PC-9 (cell line): ENCODE measurements at regions of chr1 and their contacts with region 1.

Region 1: GRCh38 chr1:199684686-199685273 is 342.7 kb upstream of the NR5A2 start:
- DNase-seq: peak; percentile 34 to 70
- H3K4me3 ChIP-seq: no peak overlapping the region
- H3K27ac ChIP-seq: peak overlapping the region; percentile 64
- H3K4me1 ChIP-seq: peaks cover 36% of the 10 kb centered on the region
- H3K27me3 ChIP-seq: no peaks in the 10 kb centered on the region
- CTCF ChIP-seq: peak; percentile 88

Region 2: GRCh38 chr1:199573047-199573446 is 111.7 kb before region 1 on chr1:
- CTCF ChIA-PET with region 1: interaction called, 10 read pairs
- POLR2A ChIA-PET with region 1: no interaction called
- intact Hi-C with region 1: no loop called
- DNase-seq: no peak
- H3K4me3 ChIP-seq: no peak overlapping the region
- H3K27ac ChIP-seq: no peak overlapping the region
- H3K4me1 ChIP-seq: no peaks in the 10 kb centered on the region
- H3K27me3 ChIP-seq: no peaks in the 10 kb centered on the region
- CTCF ChIP-seq: no peak

Region 3: GRCh38 chr1:199808110-199808870 is 123.5 kb after region 1 on chr1:
- CTCF ChIA-PET with region 1: no interaction called
- POLR2A ChIA-PET with region 1: no interaction called
- intact Hi-C with region 1: loop called (anchors 1 kb)
- DNase-seq: peak; percentile 59 to 96
- H3K4me3 ChIP-seq: no peak overlapping the region; the same call in 1 of the 2 replicates
- H3K27ac ChIP-seq: peak overlapping the region; percentile 93
- H3K4me1 ChIP-seq: peaks cover 44% of the 10 kb centered on the region
- H3K27me3 ChIP-seq: no peaks in the 10 kb centered on the region
- CTCF ChIP-seq: no peak

Region 4: DNA sequence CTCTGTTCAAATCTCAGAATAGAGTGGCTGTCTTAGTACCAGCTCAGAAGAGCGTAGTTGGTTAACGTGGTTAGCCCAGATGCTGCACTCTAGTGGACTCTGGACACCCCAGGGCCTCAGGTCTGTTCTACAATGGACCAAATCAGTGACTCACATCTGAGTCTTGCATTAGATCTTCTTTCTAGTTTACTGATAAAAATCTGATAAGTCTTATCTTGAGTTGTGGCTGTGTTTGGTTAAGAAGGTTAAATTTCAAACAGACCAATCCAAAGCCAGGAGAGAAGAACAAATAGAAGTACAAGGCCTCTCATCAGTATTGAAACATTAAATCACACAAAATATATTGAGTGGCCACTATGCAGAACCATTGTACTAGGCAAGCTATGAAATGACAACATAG is 446.8 kb after region 1 on chr1:
- CTCF ChIA-PET with region 1: no interaction called
- POLR2A ChIA-PET with region 1: no interaction called
- intact Hi-C with region 1: loop called (anchors 5 kb)
- DNase-seq: peak; percentile 17 to 77
- H3K4me3 ChIP-seq: no peak overlapping the region
- H3K27ac ChIP-seq: 0 out of 2 replicates have a peak overlapping the region, but pooled peaks have one; percentile 31
- H3K4me1 ChIP-seq: peaks cover 40% of the 10 kb centered on the region
- H3K27me3 ChIP-seq: no peaks in the 10 kb centered on the region
- CTCF ChIP-seq: no peak

Region 5: GRCh38 chr1:200302192-200302920 is 617.6 kb after region 1 on chr1:
- CTCF ChIA-PET with region 1: interaction called, 3 read pairs
- POLR2A ChIA-PET with region 1: no interaction called
- intact Hi-C with region 1: loop called (anchors 10 kb)
- DNase-seq: peak in 1 of 2 experiments; percentile 36
- H3K4me3 ChIP-seq: peak overlapping the region; percentile 66
- H3K27ac ChIP-seq: no peak overlapping the region
- H3K4me1 ChIP-seq: no peaks in the 10 kb centered on the region
- H3K27me3 ChIP-seq: no peaks in the 10 kb centered on the region
- CTCF ChIP-seq: no peak